Psoas muscle (tissue), 8 donors: ENCODE measurements at regions of chr11 and their contacts with region 1.

Region 1: GRCh38 chr11:81222491-81222890 is 1511.2 kb downstream of the FAM181B start:
- DNase-seq: no peak
- ATAC-seq: no peak
- H3K4me3 ChIP-seq: no peak overlapping the region
- H3K27ac ChIP-seq: no peak overlapping the region
- H3K4me1 ChIP-seq: no peaks in the 10 kb centered on the region
- H3K27me3 ChIP-seq: no peaks in the 10 kb centered on the region
- CTCF ChIP-seq: no peak

Region 2: GRCh38 chr11:79727221-79727620 is 1495.3 kb before region 1 on chr11:
- intact Hi-C with region 1: loop called in 1 of 2 experiments (anchors 5 kb)
- DNase-seq: peak in 1 of 2 donors; percentile 38
- ATAC-seq: no peak
- H3K4me3 ChIP-seq: no peak overlapping the region
- H3K27ac ChIP-seq: no peak overlapping the region
- H3K4me1 ChIP-seq: no peaks in the 10 kb centered on the region
- H3K27me3 ChIP-seq: no peaks in the 10 kb centered on the region
- CTCF ChIP-seq: no peak

Region 3: DNA sequence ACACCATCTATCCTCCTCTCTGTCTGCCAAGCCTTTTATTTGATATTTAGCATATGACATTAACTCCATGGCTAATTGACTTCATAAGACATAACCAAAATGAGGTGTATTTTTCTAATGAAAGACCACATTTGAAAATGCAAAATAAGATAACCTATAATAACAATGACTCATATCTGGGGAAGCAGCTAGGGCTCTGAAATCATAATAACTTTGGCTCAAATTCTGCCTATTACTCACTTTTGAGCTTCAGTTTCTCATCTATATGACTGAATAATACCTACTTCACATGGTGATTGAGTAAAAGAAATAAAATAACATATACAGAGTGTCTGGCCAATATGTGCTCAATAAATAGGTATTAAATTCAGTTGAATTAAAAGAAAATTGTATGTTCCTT is 361.9 kb before region 1 on chr11:
- intact Hi-C with region 1: no loop called
- DNase-seq: no peak
- ATAC-seq: no peak
- H3K4me3 ChIP-seq: no peak overlapping the region
- H3K27ac ChIP-seq: no peak overlapping the region
- H3K4me1 ChIP-seq: no peaks in the 10 kb centered on the region
- H3K27me3 ChIP-seq: no peaks in the 10 kb centered on the region
- CTCF ChIP-seq: no peak

Region 4: DNA sequence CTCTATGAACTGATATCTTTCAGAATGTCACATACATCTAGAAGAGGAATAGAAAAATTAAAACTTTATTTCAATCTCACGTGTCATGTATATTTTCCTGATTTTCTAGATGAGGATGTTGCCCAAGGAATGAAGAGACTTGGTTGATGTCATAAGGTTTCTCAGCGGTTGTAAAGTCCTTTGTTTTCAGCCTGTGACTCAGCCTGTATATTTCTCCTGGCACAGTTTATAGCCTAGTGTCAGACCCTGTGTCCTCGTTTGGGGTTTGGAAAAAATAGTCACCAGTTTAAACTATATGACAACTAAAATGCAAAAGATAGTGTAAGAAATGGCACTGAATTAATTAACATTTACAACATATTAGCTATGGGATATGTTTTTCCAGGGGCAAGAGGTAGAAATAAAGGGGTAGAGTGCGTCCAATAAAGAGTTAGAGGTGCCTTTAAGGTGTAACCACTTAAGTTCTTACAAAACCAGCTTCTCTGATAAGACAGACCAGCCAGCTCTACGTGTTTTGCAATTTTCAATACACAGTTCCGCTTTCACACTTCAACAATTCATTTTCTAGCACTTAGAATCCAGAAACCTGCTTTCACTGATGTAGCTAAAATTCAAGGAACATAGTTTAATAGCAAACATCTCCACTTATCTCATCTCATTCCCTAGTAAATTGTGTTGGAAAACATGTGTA is 349.0 kb before region 1 on chr11:
- intact Hi-C with region 1: no loop called
- DNase-seq: no peak
- ATAC-seq: no peak
- H3K4me3 ChIP-seq: no peak overlapping the region
- H3K27ac ChIP-seq: no peak overlapping the region
- H3K4me1 ChIP-seq: no peaks in the 10 kb centered on the region
- H3K27me3 ChIP-seq: no peaks in the 10 kb centered on the region
- CTCF ChIP-seq: no peak

Region 5: DNA sequence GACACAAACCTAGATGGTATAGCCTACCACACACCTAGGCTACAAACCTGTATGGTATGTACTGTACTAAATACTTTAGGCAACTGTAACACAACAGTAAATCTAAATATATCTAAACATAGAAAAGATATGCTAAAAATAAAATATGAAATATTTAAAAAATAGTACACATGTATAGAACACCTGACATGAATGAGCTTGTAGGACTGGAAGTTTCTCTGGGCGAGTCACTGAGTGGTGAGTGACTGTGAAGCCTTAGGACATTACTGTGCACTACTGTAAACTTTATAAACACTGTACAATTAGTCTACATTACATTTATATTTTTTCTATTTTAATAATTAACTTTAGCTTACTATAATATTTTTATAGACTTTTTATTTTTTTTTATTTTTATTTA is 209.8 kb after region 1 on chr11:
- intact Hi-C with region 1: no loop called
- DNase-seq: no peak
- ATAC-seq: no peak
- H3K4me3 ChIP-seq: no peak overlapping the region
- H3K27ac ChIP-seq: no peak overlapping the region
- H3K4me1 ChIP-seq: no peaks in the 10 kb centered on the region
- H3K27me3 ChIP-seq: no peaks in the 10 kb centered on the region
- CTCF ChIP-seq: no peak